ENCODE measurements at regions of chr11 and their contacts with region 1.

Region 1: GRCh38 chr11:10540923-10541560 is at the start of gene RNF141:
- H3K4me3 ChIP-seq: peak within 1 kb of the TSS; percentile 85
- H3K27ac ChIP-seq: no peak within 1 kb of the TSS; the same call in 1 of the 2 replicates
- H3K4me1 ChIP-seq: no peaks in the 10 kb centered on the region
- CTCF ChIP-seq: peak; percentile 94

Region 2: GRCh38 chr11:9170450-9170849 is 1370.6 kb before region 1 on chr11:
- CTCF ChIA-PET with region 1: no interaction called
- POLR2A ChIA-PET with region 1: no interaction called
- H3K4me3 ChIP-seq: no peak overlapping the region
- H3K27ac ChIP-seq: no peak overlapping the region
- H3K4me1 ChIP-seq: no peaks in the 10 kb centered on the region
- CTCF ChIP-seq: no peak

Region 3: DNA sequence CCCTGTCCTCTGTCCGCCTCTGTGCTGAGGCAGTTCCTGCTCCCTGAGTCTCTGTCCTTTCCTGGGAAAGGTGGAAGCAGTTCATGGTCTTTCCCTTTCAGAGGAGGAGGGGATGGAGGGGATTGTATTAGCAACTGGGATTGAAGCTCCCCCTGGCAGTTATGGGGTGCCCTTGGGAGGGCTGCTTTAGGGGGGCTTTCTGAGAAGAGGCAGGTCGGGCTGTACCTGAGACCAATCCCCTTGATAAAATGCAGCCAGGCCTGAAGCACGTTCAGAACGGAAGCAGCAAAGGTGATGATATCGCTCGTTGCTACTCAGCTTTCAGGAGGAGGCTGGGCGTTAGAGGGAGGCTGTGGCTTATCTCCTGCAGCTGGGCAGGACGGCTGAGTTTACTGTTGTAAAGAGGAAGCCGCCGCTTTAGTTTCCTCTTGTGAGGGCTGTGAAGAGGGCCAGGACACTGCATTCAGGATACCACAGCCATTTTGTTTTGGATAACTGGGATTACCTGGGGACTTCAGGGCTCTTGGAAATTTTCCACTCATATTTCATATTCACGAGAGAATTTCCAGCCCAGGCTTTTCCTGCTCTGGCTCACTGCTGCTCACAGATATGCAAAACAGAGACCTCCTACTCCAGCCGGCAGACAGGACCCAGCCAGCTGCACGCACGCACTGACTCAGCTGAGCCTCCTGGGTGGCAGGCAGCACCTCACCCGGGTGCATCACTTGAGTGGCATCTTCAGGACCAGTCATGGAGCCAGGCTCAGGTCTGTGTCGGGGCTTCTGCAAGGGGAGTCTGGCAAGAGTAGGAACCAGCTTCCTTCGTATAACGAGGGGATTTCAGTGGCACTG is 85.2 kb before region 1 on chr11:
- CTCF ChIA-PET with region 1: interaction called, 4 read pairs
- POLR2A ChIA-PET with region 1: interaction called, 12 read pairs
- H3K4me3 ChIP-seq: no peak overlapping the region; the same call in 1 of the 2 replicates
- H3K27ac ChIP-seq: no peak overlapping the region
- H3K4me1 ChIP-seq: no peaks in the 10 kb centered on the region
- CTCF ChIP-seq: no peak

Measured in HEK293 (cell line).